OCI-LY7 (cell line): ENCODE measurements at regions of chr4 and their contacts with region 1.

Region 1: GRCh38 chr4:42151568-42152506 is 618 bp downstream of the BEND4 start:
- DNase-seq: peak; percentile 91
- H3K4me3 ChIP-seq: peak overlapping the region; percentile 82
- H3K27ac ChIP-seq: peak overlapping the region; percentile 63
- H3K4me1 ChIP-seq: peaks cover 50% of the 10 kb centered on the region
- CTCF ChIP-seq: no peak

Region 2: DNA sequence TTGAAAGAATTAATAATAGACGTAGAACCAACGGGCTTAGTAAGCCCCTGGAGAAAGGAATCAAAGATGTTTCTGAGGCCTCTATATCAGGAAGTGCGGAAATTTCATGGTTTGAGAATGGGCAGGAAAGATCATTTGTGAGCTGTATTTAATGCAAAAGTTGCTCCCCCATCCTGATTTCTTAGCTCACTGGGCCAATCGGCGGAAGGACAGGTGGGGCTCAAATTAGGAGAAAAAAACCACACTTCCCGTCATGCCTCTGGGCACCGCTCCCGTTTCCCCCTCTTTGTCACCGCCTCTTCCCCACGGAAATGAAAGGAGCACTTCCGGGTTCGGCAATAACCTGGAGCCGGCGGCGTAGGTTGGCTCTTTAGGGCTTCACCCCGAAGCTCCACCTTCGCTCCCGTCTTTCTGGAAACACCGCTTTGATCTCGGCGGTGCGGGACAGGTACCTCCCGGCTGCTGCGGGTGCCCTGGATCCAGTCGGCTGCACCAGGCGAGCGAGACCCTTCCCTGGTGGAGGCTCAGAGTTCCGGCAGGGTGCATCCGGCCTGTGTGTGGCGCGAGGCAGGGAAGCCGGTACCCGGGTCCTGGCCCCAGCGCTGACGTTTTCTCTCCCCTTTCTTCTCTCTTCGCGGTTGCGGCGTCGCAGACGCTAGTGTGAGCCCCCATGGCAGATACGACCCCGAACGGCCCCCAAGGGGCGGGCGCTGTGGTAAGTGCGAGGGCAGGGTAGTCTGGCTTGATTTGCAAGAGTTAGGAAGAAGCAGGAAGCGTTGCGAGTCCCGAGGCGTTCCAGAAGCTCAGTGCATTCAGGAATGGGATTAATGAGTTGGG is 216.8 kb before region 1 on chr4 and contains the start of gene TMEM33:
- CTCF ChIA-PET with region 1: no interaction called
- POLR2A ChIA-PET with region 1: interaction called, 3 read pairs
- intact Hi-C with region 1: loop called (anchors 5 kb)
- DNase-seq: peak; percentile 90
- H3K4me3 ChIP-seq: peak within 1 kb of the TSS; percentile 97
- H3K27ac ChIP-seq: peak within 1 kb of the TSS; percentile 44
- H3K4me1 ChIP-seq: peaks cover 29% of the 10 kb centered on the region
- CTCF ChIP-seq: 0 out of 2 replicates have a peak, but pooled peaks have one; percentile 11
- total RNA-seq, gene TMEM33: 21.0 and 25.7 TPM in 2 replicates

Region 3: DNA sequence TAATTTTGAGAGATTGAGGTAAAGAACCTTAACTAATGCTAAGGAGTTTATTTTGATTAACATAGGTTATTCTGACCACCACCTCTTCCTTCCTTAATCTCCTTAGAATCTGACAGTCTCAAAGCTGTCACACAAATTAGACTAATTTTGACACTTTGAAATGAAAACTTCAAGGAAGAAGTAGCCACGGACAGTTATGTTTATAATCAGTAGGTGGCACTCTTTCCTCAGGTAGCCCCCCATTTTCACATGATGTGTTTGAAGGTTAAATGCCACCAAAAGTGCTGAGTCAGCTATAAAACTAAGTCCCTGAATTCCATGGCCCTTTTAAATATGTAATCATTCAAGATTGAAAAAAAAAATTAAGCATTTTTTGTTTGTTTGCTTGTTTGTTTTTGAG is 194.2 kb before region 1 on chr4:
- CTCF ChIA-PET with region 1: no interaction called
- POLR2A ChIA-PET with region 1: no interaction called
- intact Hi-C with region 1: loop called (anchors 2 kb)
- DNase-seq: peak; percentile 63
- H3K4me3 ChIP-seq: no peak overlapping the region
- H3K27ac ChIP-seq: no peak overlapping the region
- H3K4me1 ChIP-seq: no peaks in the 10 kb centered on the region
- CTCF ChIP-seq: peak; percentile 81

Region 4: GRCh38 chr4:41990365-41991111 is 161.3 kb before region 1 on chr4 and contains the start of gene SLC30A9:
- CTCF ChIA-PET with region 1: no interaction called
- POLR2A ChIA-PET with region 1: interaction called, 3 read pairs
- intact Hi-C with region 1: loop called (anchors 5 kb)
- DNase-seq: peak; percentile 96
- H3K4me3 ChIP-seq: peak within 1 kb of the TSS; percentile 94
- H3K27ac ChIP-seq: no peak within 1 kb of the TSS
- H3K4me1 ChIP-seq: peaks cover 26% of the 10 kb centered on the region
- CTCF ChIP-seq: no peak
- total RNA-seq, gene SLC30A9: 33.8 and 60.2 TPM in 2 replicates

Region 5: GRCh38 chr4:42088386-42088785 is 63.5 kb before region 1 on chr4:
- CTCF ChIA-PET with region 1: no interaction called
- POLR2A ChIA-PET with region 1: no interaction called
- intact Hi-C with region 1: no loop called
- DNase-seq: no peak
- H3K4me3 ChIP-seq: no peak overlapping the region
- H3K27ac ChIP-seq: no peak overlapping the region
- H3K4me1 ChIP-seq: no peaks in the 10 kb centered on the region
- CTCF ChIP-seq: no peak